GM12878 (cell line): ENCODE measurements at regions of chr6 and their contacts with region 1.

Region 1: GRCh38 chr6:129598244-129599187 is 111.5 kb downstream of the ARHGAP18 start:
- DNase-seq: peak; percentile 76
- ATAC-seq: peak; percentile 88
- H3K4me3 ChIP-seq: no peak overlapping the region
- H3K27ac ChIP-seq: peak overlapping the region; percentile 16
- H3K4me1 ChIP-seq: peaks cover 11% of the 10 kb centered on the region
- H3K27me3 ChIP-seq: no peaks in the 10 kb centered on the region
- CTCF ChIP-seq: peak; percentile 59 to 90 (median 78)
- EP300 ChIP-seq: no peak
- POLR2A ChIP-seq: no peak
- RAD21 ChIP-seq: peak; percentile 99

Region 2: DNA sequence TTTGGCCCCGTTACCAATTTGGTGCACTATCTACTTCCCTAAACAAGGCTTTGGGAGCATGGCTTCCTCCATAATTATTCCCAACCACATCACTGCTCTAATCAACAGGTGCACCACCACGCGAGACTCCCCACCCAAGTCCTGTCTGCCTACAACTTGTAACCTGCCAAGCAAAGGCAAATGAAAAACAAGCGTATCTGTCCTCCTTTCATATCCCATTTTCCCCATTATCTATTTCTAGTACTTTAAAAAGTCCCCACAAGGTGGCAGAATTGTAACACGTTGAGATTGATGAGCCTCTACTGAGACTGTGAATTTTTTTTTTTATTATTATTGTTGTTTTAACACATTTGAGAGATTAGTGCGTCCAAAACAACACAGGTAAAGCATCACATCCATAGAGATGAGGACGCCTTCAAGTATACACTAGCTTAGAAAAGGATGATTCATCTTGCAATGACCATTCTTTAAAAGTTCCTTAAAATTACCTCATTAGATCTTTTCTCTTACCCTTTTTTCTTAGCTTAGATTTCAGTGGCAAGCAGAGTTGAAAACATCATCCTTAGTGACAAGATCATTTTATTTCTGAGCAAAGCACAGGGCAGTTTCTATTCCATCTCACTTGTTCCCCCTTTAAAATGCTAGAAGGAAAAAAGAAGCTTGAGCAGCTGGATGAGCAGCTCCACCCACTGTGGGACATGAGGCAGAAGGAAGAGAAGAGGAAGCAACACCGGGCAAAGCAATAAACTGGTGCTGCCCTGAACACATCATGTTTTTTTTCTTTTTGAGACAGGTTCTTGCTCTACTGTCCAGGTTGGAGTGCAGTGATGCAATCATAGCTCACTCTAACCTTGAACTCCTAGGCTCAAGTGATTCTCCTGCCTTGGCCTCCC is 99.3 kb before region 1 on chr6:
- CTCF ChIA-PET with region 1: interaction called, 92 read pairs
- POLR2A ChIA-PET with region 1: no interaction called
- RAD21 ChIA-PET with region 1: interaction called, 33 read pairs
- SMC1A ChIA-PET with region 1: interaction called, 51 read pairs
- in situ Hi-C with region 1: no loop called
- intact Hi-C with region 1: loop called (anchors 2 kb)
- DNase-seq: no peak
- ATAC-seq: peak; percentile 89
- H3K4me3 ChIP-seq: no peak overlapping the region
- H3K27ac ChIP-seq: no peak overlapping the region
- H3K4me1 ChIP-seq: peaks cover 6% of the 10 kb centered on the region
- H3K27me3 ChIP-seq: no peaks in the 10 kb centered on the region
- CTCF ChIP-seq: peak; percentile 37 to 63 (median 44); a peak in 5 of 6 replicates
- EP300 ChIP-seq: no peak
- POLR2A ChIP-seq: no peak
- RAD21 ChIP-seq: peak; percentile 88

Region 3: GRCh38 chr6:129621247-129621646 is 22.7 kb after region 1 on chr6:
- CTCF ChIA-PET with region 1: interaction called, 6 read pairs
- POLR2A ChIA-PET with region 1: interaction called, 3 read pairs
- RAD21 ChIA-PET with region 1: interaction called, 12 read pairs
- SMC1A ChIA-PET with region 1: interaction called, 5 read pairs
- in situ Hi-C with region 1: no loop called
- intact Hi-C with region 1: no loop called
- DNase-seq: no peak
- ATAC-seq: peak; percentile 74
- H3K4me3 ChIP-seq: no peak overlapping the region
- H3K27ac ChIP-seq: no peak overlapping the region
- H3K4me1 ChIP-seq: no peaks in the 10 kb centered on the region
- H3K27me3 ChIP-seq: no peaks in the 10 kb centered on the region
- CTCF ChIP-seq: peak; percentile 29 to 50 (median 37); a peak in 4 of 6 replicates
- EP300 ChIP-seq: no peak
- POLR2A ChIP-seq: no peak
- RAD21 ChIP-seq: 0 out of 2 replicates have a peak, but pooled peaks have one; percentile 7

Region 4: DNA sequence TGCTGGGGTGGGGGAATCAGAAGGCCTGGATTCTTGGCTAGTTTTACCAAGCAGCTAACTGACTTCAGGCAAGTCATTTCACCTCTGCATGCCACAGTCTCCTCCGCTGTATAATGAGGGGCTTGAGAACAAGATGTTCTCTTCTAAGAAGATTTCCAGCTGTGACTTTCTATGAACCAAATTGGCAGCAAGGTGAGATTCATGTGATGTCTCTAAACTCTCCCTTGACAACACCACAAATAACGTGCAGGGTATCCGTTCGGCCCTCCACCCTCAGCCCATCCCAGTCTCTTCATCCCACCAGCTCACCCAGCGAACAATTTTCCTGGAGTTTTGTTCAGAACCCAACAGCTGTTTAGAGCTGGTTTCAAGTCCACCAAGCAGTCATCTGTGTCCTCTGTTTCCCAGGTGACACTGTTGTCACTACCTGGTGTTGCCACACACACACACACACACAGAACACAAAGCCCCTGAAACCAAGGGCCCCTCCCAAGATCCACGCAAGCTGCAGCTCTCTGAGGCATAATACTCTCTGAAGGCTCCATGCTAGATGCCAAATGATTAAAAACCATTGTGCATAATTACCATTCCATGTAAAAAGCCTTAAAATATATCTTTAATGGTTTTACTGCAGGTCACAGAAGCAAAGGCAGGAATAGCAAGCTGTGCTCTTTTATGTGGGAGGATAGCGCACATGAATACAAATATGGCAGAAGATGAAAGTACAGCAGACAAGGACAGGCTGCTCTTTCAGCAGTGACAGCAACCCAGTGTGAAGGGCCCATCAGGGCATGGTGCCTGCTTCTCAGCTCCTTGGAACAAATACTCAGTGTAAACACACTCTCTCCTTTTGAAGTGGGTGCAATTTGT is 63.3 kb after region 1 on chr6:
- CTCF ChIA-PET with region 1: interaction called, 14 read pairs
- POLR2A ChIA-PET with region 1: interaction called, 3 read pairs
- RAD21 ChIA-PET with region 1: interaction called, 12 read pairs
- SMC1A ChIA-PET with region 1: interaction called, 12 read pairs
- in situ Hi-C with region 1: no loop called
- intact Hi-C with region 1: no loop called
- DNase-seq: no peak
- ATAC-seq: peak; percentile 40
- H3K4me3 ChIP-seq: peak overlapping the region; percentile 7; the same call in 1 of the 2 replicates
- H3K27ac ChIP-seq: peak overlapping the region; percentile 89
- H3K4me1 ChIP-seq: peaks cover 44% of the 10 kb centered on the region
- H3K27me3 ChIP-seq: no peaks in the 10 kb centered on the region
- CTCF ChIP-seq: no peak
- EP300 ChIP-seq: peak in 1 of 2 experiments; percentile 61; a peak in 1 of 4 replicates
- POLR2A ChIP-seq: no peak
- RAD21 ChIP-seq: no peak

Region 5: DNA sequence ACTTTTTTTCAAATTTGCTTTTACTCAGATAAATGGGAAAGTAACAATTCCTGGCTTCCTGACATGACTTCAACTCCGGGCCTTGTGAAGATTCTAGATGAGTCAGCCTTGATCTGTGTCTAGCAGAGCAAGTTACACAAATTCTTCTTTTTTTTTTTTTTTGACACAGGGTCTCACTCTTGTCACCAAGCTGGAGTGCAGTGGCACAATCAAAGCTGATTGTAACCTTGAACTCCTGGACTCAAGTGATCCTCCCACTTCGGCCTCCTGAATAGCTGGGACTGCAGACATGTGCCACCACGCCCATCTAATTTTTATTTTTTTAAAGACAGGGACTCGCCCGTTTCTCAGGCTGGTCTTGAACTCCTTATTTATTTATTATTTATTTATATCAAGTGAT is 118.8 kb after region 1 on chr6:
- CTCF ChIA-PET with region 1: interaction called, 411 read pairs
- POLR2A ChIA-PET with region 1: interaction called, 3 read pairs
- RAD21 ChIA-PET with region 1: interaction called, 50 read pairs
- SMC1A ChIA-PET with region 1: interaction called, 407 read pairs
- in situ Hi-C with region 1: no loop called
- intact Hi-C with region 1: no loop called
- DNase-seq: no peak
- ATAC-seq: no peak
- H3K4me3 ChIP-seq: no peak overlapping the region
- H3K27ac ChIP-seq: no peak overlapping the region
- H3K4me1 ChIP-seq: no peaks in the 10 kb centered on the region
- H3K27me3 ChIP-seq: no peaks in the 10 kb centered on the region
- CTCF ChIP-seq: no peak
- EP300 ChIP-seq: no peak
- POLR2A ChIP-seq: no peak
- RAD21 ChIP-seq: no peak

Region 6: GRCh38 chr6:129759796-129760605 is 161.5 kb after region 1 on chr6:
- CTCF ChIA-PET with region 1: interaction called, 17 read pairs
- POLR2A ChIA-PET with region 1: no interaction called
- RAD21 ChIA-PET with region 1: interaction called, 10 read pairs
- SMC1A ChIA-PET with region 1: interaction called, 10 read pairs
- in situ Hi-C with region 1: no loop called
- intact Hi-C with region 1: no loop called
- DNase-seq: no peak
- ATAC-seq: no peak
- H3K4me3 ChIP-seq: no peak overlapping the region
- H3K27ac ChIP-seq: no peak overlapping the region
- H3K4me1 ChIP-seq: no peaks in the 10 kb centered on the region
- H3K27me3 ChIP-seq: no peaks in the 10 kb centered on the region
- CTCF ChIP-seq: no peak
- EP300 ChIP-seq: no peak
- POLR2A ChIP-seq: no peak
- RAD21 ChIP-seq: no peak

Region 7: GRCh38 chr6:129981598-129981997 is 383.1 kb after region 1 on chr6:
- CTCF ChIA-PET with region 1: interaction called, 14 read pairs
- POLR2A ChIA-PET with region 1: no interaction called
- RAD21 ChIA-PET with region 1: no interaction called
- SMC1A ChIA-PET with region 1: interaction called, 10 read pairs
- in situ Hi-C with region 1: no loop called
- intact Hi-C with region 1: no loop called
- DNase-seq: no peak
- ATAC-seq: peak; percentile 49; the same call in 2 of the 3 replicates
- H3K4me3 ChIP-seq: no peak overlapping the region
- H3K27ac ChIP-seq: no peak overlapping the region
- H3K4me1 ChIP-seq: no peaks in the 10 kb centered on the region
- H3K27me3 ChIP-seq: no peaks in the 10 kb centered on the region; a peak in 1 of 4 replicates
- CTCF ChIP-seq: peak in 1 of 3 experiments; percentile 33; a peak in 1 of 6 replicates
- EP300 ChIP-seq: no peak
- POLR2A ChIP-seq: no peak
- RAD21 ChIP-seq: peak; percentile 30; the same call in 1 of the 2 replicates